ENCODE measurements at regions of chr11 and their contacts with region 1.

Region 1: GRCh38 chr11:33329705-33330329 is 72.6 kb downstream of the HIPK3 start:
- DNase-seq: peak; percentile 53
- H3K4me3 ChIP-seq: no peak overlapping the region
- H3K27ac ChIP-seq: no peak overlapping the region
- H3K4me1 ChIP-seq: peaks cover 24% of the 10 kb centered on the region
- H3K27me3 ChIP-seq: no peaks in the 10 kb centered on the region
- CTCF ChIP-seq: peak; percentile 26 to 67 (median 62)
- POLR2A ChIP-seq: no peak

Region 2: DNA sequence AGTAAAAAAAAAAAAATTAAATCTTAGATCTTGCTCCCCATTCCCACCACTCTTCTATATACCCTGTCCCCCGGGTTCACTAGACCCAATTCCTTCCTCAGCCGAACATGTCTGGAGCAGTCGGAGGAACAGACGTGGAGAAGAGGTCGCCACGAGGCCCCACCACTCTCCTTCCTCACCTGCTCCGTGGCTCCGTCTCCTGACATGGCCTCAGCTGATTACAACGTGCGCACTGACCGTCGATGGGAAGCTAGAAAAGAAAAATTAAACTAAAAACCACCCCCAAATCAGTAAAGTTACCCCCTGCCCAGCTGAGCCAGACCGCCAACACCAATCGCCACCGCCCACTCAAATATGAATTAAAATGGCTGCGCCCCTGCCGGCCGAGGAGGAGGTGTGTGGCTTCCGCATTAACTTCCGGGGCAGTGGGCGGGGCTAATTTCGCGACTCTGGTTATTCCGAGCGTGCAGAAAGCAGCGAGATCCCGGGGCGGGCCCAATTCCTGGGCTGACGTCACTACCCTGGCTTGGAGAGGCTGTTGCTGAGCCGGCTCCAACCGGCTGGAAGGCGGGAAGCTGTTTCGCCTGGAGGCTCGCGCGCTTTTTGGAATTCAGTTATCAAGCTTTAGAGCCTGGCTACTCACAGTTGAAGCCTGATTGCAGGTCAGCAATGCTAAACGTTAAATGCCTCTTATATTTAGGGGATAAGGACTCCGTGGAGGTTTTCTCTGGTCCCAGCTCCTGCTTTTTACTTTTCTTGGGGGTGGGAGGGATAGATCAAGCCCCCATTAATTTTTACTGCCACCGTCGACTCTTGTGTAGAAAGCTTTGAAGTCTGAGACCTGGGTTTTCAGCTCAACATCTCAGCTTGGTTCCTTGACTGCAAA is 168.5 kb before region 1 on chr11 and contains the start of gene CSTF3:
- intact Hi-C with region 1: loop called (anchors 10 kb)
- DNase-seq: peak; percentile 100
- H3K4me3 ChIP-seq: peak within 1 kb of the TSS; percentile 70 to 80
- H3K27ac ChIP-seq: peak within 1 kb of the TSS; percentile 83 to 84
- H3K4me1 ChIP-seq: no peaks in the 10 kb centered on the region
- H3K27me3 ChIP-seq: no peaks in the 10 kb centered on the region
- CTCF ChIP-seq: peak; percentile 44 to 86 (median 85)
- POLR2A ChIP-seq: peak; percentile 33
- total RNA-seq, gene CSTF3: 31.0 to 46.6 TPM

Region 3: DNA sequence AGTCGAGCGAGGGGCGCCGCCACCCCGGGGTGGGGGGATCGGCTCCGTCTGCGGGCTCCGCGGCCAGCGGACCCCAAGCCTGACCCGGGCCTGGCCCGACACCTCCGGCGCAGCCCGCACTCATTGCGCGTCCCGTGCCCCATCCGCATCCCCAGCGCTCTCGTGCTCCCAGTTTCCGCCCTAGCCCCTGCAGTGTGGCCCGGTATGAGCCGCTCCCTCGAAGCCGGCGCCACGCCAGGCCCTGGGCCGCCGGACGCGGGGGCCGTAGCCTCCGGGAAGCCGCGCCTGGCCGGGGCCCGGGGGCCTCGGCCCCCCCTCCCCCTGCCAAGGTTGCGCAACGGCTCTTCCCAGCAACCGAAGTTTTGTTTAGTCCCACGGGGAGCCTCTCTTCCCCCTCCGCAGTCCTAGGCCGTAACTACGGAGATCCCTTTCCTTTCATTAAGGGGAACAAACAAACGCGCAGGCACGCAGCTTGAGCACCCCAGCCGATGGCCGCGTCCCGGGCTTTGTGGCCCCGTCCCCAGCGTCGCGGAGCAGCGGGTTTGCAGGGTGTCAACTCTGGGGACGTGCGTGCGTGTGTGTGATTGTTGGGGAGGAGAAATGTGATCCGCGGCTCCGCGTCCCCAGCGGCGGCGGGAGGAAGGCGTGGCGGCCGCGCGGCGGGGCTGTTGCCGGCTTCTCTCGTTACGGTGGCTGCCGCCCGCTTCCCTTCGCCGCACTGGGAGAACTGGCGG is 71.8 kb before region 1 on chr11:
- intact Hi-C with region 1: loop called (anchors 10 kb)
- DNase-seq: peak; percentile 85
- H3K4me3 ChIP-seq: peak overlapping the region; percentile 70 to 92
- H3K27ac ChIP-seq: peak overlapping the region; percentile 98 to 100
- H3K4me1 ChIP-seq: peaks cover 34% of the 10 kb centered on the region
- H3K27me3 ChIP-seq: no peaks in the 10 kb centered on the region
- CTCF ChIP-seq: peak in 1 of 3 experiments; percentile 18
- POLR2A ChIP-seq: no peak

Region 4: DNA sequence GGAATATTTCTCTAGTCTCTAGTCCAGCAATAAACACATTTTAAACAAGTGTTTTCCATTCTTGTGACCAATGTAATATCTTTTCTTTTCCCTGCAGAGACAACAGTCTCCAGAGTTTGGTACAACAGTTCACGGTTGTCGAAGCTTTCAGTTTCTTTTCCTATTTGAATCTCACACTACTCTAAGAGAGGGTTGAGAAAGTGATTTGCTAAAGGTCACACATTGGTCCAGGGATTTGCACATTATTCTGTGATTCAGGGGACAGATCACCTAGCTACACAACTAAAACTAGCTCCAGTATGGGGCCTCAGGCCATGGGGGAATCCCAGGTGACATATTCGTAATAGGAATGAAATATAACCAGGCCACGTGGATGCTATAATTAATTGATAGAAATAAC is 59.8 kb after region 1 on chr11:
- intact Hi-C with region 1: no loop called
- DNase-seq: no peak
- H3K4me3 ChIP-seq: no peak overlapping the region
- H3K27ac ChIP-seq: no peak overlapping the region
- H3K4me1 ChIP-seq: no peaks in the 10 kb centered on the region
- H3K27me3 ChIP-seq: no peaks in the 10 kb centered on the region
- CTCF ChIP-seq: no peak
- POLR2A ChIP-seq: no peak

Measured in testis (tissue), 5 donors.